Pancreas (tissue), 10 donors: ENCODE measurements at regions of chr17 and their contacts with region 1.

Region 1: DNA sequence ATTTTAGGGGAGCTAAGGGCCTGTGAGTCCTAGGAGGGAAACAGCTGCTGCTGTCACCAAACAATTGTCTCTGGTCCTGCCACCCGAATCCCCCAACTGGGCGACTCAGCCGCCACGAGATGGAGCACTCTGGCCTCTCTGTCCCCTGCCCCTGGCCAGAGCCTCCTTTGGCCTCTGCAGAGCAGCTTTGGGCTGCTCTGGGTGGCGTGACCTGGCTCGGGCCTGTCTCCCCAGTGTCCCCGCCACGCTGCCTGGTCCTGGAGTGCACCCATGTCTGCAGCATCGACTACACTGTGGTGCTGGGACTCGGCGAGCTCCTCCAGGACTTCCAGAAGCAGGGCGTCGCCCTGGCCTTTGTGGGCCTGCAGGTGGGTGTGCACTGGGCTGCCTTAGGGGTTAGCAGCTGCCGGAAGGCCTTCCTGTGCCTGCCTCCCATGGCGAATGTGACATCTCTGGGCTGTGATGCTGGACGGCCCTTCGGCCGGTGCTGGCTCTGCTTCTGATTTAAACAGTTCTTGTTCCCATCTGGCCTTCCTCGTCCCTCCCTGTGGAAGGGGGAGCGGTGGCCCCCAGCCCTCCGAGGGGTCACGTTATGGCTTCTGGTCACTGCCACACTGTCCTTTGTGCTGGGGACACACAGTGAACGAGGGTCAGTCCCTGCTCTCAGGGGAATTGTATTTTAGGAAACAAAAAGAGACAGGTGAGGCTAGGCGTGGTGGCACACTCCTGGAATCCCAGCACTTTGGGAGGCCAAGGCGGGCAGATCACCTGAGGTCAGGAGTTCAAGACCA is 11.5 kb upstream of the RNF213 start:
- DNase-seq: peak in 1 of 6 donors; percentile 60
- ATAC-seq: no peak
- H3K4me3 ChIP-seq: no peak overlapping the region
- H3K27ac ChIP-seq: no peak overlapping the region
- H3K4me1 ChIP-seq: peaks cover 0 to 3% (median 0%) of the 10 kb centered on the region in 3 donors
- H3K27me3 ChIP-seq: no peaks in the 10 kb centered on the region
- CTCF ChIP-seq: no peak

Region 2: DNA sequence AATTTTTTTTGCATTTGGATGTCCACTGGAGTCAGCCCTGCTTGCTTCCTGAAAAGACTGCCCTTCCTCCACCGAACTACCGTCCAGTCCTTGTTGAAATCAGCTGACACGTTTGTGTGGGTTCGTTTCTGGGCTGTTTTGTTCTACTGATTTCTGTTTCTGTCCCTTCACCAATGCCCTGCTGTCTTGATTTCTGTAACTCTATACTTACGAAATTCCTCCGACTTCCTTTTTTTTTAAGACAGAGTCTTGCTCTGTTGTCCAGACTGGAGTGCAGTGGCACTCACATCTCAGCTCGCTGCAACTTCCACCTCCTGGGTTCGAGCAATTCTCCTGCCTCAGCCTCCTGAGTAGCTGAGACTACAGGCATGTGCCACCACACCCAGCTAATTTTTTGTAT is 156.2 kb before region 1 on chr17:
- intact Hi-C with region 1: loop called in 1 of 3 experiments (anchors 10 kb)
- DNase-seq: no peak
- ATAC-seq: peak in 2 of 4 donors; percentile 69 to 79
- H3K4me3 ChIP-seq: no peak overlapping the region
- H3K27ac ChIP-seq: peak overlapping the region in 2 of 4 donors; percentile 6 to 44
- H3K4me1 ChIP-seq: no peaks in the 10 kb centered on the region
- H3K27me3 ChIP-seq: no peaks in the 10 kb centered on the region
- CTCF ChIP-seq: no peak